T-cell (primary cell): ENCODE measurements at regions of chr12 and their contacts with region 1.

Region 1: GRCh38 chr12:57904848-57905811 is 36.2 kb upstream of the ATP23 start:
- DNase-seq: peak; percentile 53 to 92 (median 78)
- ATAC-seq: peak; percentile 97 to 100 (median 98)
- H3K4me3 ChIP-seq: no peak overlapping the region
- H3K4me3 Mint-ChIP-seq: peak overlapping the region; percentile 0 to 48 (median 29)
- H3K27ac ChIP-seq: no peak overlapping the region
- H3K27ac Mint-ChIP-seq: peak overlapping the region; percentile 2 to 61
- H3K4me1 ChIP-seq: peaks cover 2 to 10% of the 10 kb centered on the region in 2 experiments
- H3K4me1 Mint-ChIP-seq: peaks cover 8 to 11% (median 11%) of the 10 kb centered on the region in 3 donors
- H3K27me3 ChIP-seq: peaks cover 0 to 11% of the 10 kb centered on the region in 2 experiments
- H3K27me3 Mint-ChIP-seq: peaks cover 14 to 17% of the 10 kb centered on the region in 2 donors

Region 2: DNA sequence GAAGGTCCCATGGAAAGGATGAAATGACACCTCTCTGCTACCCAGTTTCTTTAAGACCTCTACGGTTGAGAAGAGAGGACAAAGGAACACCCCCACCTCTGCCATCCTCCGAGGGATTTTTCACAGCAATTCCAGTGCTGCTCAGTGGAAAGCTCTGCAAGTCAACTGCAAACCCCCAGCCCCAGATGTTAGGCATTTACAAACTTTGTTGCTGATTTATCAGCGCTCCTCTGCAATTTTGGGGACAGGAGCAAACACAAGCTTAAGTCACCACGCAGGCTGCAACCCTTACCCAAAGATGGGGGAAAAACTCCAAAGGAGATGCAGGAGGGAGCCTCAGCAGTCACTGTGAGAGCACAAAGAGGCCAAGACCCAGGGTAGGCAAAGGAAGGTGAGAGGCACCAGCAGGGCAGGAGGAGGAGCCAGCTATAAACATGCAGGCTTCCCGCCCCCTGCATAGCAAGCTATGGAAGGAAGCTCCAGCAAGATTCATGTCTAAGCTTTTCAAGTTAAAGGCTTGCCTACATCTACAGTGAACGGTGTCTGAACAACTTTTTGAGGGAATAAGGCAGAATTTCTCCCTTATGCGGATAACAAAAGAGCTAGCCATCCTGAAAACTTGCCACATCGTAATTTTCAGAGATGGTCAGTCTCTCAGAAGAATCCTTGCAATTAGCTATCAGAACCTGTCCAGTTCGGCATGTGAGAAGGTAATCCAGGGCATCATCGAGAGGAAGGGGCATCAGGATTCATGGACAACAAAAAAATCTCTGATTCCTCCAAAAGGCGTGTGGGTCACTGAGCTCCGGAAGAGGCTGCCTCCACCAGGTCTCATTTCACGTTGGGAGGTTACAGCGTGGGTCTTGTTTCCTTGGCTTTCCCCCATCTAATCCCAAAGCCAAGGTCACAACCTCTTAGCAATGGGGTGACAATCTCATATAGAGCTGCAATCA is 62.5 kb before region 1 on chr12:
- CTCF ChIA-PET with region 1: interaction called, 6 to 11 read pairs
- POLR2A ChIA-PET with region 1: no interaction called
- DNase-seq: peak in 26 of 35 experiments; percentile 20 to 56 (median 42)
- ATAC-seq: peak; percentile 19 to 38 (median 24)
- H3K4me3 ChIP-seq: peak overlapping the region; percentile 15 to 16
- H3K4me3 Mint-ChIP-seq: peak overlapping the region; percentile 88 to 90 (median 89)
- H3K27ac ChIP-seq: no peak overlapping the region
- H3K27ac Mint-ChIP-seq: peak overlapping the region; percentile 86 to 93
- H3K4me1 ChIP-seq: peaks cover 50 to 76% of the 10 kb centered on the region in 2 experiments
- H3K4me1 Mint-ChIP-seq: peaks cover 73 to 76% (median 74%) of the 10 kb centered on the region in 3 donors
- H3K27me3 ChIP-seq: no peaks in the 10 kb centered on the region
- H3K27me3 Mint-ChIP-seq: no peaks in the 10 kb centered on the region

Region 3: DNA sequence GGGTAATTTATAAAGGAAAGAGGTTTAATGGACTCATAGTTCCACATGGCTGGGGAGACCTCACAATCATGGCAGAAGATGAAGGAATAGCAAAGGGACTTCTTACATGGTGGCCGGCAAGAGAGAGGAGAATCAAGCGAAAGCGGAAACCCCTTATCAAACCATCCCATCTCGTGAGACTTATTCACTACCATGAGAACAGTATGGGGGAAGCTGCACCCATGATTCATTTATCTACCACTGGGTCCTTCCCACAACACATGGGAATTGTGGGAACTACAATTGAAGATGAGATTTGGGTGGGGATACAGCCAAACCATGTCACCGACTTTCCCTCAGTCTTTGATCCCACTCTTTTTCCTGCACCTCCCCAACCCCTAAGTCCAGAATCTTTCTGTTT is 46.0 kb before region 1 on chr12:
- CTCF ChIA-PET with region 1: no interaction called
- POLR2A ChIA-PET with region 1: no interaction called
- DNase-seq: no peak
- ATAC-seq: no peak
- H3K4me3 ChIP-seq: no peak overlapping the region
- H3K4me3 Mint-ChIP-seq: no peak overlapping the region
- H3K27ac ChIP-seq: no peak overlapping the region
- H3K27ac Mint-ChIP-seq: no peak overlapping the region
- H3K4me1 ChIP-seq: no peaks in the 10 kb centered on the region
- H3K4me1 Mint-ChIP-seq: no peaks in the 10 kb centered on the region
- H3K27me3 ChIP-seq: peaks cover 0 to 31% of the 10 kb centered on the region in 2 experiments
- H3K27me3 Mint-ChIP-seq: peaks cover 8 to 19% of the 10 kb centered on the region in 2 donors